Mammary epithelial cell (primary cell): ENCODE measurements at regions of chr2 and their contacts with region 1.

Region 1: DNA sequence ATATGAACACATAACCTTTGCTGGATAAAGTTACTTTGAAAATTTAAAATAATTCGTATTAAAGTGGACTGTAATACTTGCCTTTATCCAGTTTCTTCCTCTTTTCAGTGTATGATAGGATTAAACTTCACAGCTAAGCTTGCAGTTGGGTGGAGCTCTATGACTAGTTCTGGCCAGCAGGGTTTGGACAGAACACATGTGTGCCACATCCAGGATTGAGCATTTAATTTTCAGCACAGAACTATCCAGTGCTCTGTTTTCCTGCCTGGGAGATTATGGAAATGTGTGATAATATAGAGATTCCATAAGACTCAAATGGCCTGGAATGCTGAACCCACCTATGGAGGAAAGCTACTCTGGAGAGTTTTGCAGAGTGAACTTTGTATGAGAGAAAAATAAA is 200.2 kb downstream of the OSR1 start:
- DNase-seq: no peak
- H3K4me3 ChIP-seq: no peak overlapping the region
- H3K27ac ChIP-seq: no peak overlapping the region
- H3K4me1 ChIP-seq: no peaks in the 10 kb centered on the region
- H3K27me3 ChIP-seq: no peaks in the 10 kb centered on the region
- CTCF ChIP-seq: peak in 1 of 2 donors; percentile 22

Region 2: GRCh38 chr2:19228715-19229114 is 70.5 kb after region 1 on chr2:
- CTCF ChIA-PET with region 1: interaction called, 10 read pairs
- dilution Hi-C with region 1: no loop called
- in situ Hi-C with region 1: no loop called
- intact Hi-C with region 1: no loop called
- DNase-seq: peak; percentile 91
- H3K4me3 ChIP-seq: peak overlapping the region in 1 of 3 experiments; percentile 13
- H3K27ac ChIP-seq: peak overlapping the region; percentile 26
- H3K4me1 ChIP-seq: peaks cover 36% of the 10 kb centered on the region
- H3K27me3 ChIP-seq: no peaks in the 10 kb centered on the region
- CTCF ChIP-seq: no peak